HCT116 (cell line): ENCODE measurements at regions of chr5 and their contacts with region 1.

Region 1: GRCh38 chr5:76790632-76791290 is 28.1 kb upstream of the F2RL1 start:
- DNase-seq: peak; percentile 95
- ATAC-seq: peak; percentile 76
- H3K4me3 ChIP-seq: peak overlapping the region in 1 of 2 experiments; percentile 12; a peak in 1 of 4 replicates
- H3K27ac ChIP-seq: peak overlapping the region; percentile 79
- H3K4me1 ChIP-seq: peaks cover 46 to 75% of the 10 kb centered on the region in 2 experiments
- H3K27me3 ChIP-seq: no peaks in the 10 kb centered on the region
- CTCF ChIP-seq: no peak
- POLR2A ChIP-seq: no peak
- RAD21 ChIP-seq: peak; percentile 32; the same call in 1 of the 2 replicates

Region 2: GRCh38 chr5:76660360-76660759 is 130.4 kb before region 1 on chr5:
- CTCF ChIA-PET with region 1: no interaction called
- POLR2A ChIA-PET with region 1: no interaction called
- RAD21 ChIA-PET with region 1: no interaction called
- intact Hi-C with region 1: no loop called
- DNase-seq: no peak
- ATAC-seq: no peak
- H3K4me3 ChIP-seq: no peak overlapping the region
- H3K27ac ChIP-seq: no peak overlapping the region
- H3K4me1 ChIP-seq: no peaks in the 10 kb centered on the region
- H3K27me3 ChIP-seq: no peaks in the 10 kb centered on the region
- CTCF ChIP-seq: no peak
- POLR2A ChIP-seq: no peak
- RAD21 ChIP-seq: no peak

Region 3: GRCh38 chr5:76701298-76701697 is 89.5 kb before region 1 on chr5:
- CTCF ChIA-PET with region 1: no interaction called
- POLR2A ChIA-PET with region 1: no interaction called
- RAD21 ChIA-PET with region 1: no interaction called
- intact Hi-C with region 1: no loop called
- DNase-seq: no peak
- ATAC-seq: no peak
- H3K4me3 ChIP-seq: no peak overlapping the region
- H3K27ac ChIP-seq: no peak overlapping the region
- H3K4me1 ChIP-seq: no peaks in the 10 kb centered on the region
- H3K27me3 ChIP-seq: no peaks in the 10 kb centered on the region
- CTCF ChIP-seq: no peak
- POLR2A ChIP-seq: no peak
- RAD21 ChIP-seq: no peak

Region 4: DNA sequence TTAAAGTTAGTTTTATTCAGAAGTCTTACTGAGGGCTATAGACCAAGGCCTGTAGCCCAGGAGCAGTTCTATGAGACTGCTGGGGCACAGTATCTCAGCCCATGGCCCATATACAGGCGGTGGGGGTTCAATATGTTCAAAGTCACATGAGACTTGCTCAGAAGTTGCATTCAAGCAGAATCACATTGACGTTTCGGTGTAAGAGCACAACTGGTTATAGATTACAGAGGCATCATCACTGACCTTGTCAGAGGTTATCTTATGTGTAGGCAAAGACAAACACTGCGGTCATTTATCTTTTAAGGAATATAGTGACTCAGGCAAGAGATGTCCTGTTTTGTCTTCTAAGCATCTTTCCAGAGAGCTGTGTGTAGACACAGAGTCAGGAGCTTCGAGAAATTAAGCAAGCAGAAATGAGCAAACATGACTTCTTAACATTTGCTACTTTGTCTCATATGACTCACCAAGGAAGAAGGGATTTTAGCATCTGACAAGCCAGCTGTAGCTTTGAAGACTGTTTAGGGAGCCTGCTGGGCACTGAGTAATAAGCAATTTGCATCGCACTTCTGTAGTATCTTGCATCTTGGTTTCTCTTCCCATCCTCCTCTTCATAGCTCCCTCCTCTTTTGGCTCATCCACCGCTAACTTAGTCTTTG is 15.2 kb after region 1 on chr5:
- CTCF ChIA-PET with region 1: interaction called, 8 read pairs
- POLR2A ChIA-PET with region 1: interaction called, 28 read pairs
- RAD21 ChIA-PET with region 1: no interaction called
- intact Hi-C with region 1: no loop called
- DNase-seq: peak; percentile 94
- ATAC-seq: peak; percentile 79
- H3K4me3 ChIP-seq: peak overlapping the region; percentile 17 to 24
- H3K27ac ChIP-seq: peak overlapping the region; percentile 72
- H3K4me1 ChIP-seq: peaks cover 53 to 95% of the 10 kb centered on the region in 2 experiments
- H3K27me3 ChIP-seq: no peaks in the 10 kb centered on the region
- CTCF ChIP-seq: no peak
- POLR2A ChIP-seq: no peak
- RAD21 ChIP-seq: peak; percentile 26; the same call in 1 of the 2 replicates

Region 5: DNA sequence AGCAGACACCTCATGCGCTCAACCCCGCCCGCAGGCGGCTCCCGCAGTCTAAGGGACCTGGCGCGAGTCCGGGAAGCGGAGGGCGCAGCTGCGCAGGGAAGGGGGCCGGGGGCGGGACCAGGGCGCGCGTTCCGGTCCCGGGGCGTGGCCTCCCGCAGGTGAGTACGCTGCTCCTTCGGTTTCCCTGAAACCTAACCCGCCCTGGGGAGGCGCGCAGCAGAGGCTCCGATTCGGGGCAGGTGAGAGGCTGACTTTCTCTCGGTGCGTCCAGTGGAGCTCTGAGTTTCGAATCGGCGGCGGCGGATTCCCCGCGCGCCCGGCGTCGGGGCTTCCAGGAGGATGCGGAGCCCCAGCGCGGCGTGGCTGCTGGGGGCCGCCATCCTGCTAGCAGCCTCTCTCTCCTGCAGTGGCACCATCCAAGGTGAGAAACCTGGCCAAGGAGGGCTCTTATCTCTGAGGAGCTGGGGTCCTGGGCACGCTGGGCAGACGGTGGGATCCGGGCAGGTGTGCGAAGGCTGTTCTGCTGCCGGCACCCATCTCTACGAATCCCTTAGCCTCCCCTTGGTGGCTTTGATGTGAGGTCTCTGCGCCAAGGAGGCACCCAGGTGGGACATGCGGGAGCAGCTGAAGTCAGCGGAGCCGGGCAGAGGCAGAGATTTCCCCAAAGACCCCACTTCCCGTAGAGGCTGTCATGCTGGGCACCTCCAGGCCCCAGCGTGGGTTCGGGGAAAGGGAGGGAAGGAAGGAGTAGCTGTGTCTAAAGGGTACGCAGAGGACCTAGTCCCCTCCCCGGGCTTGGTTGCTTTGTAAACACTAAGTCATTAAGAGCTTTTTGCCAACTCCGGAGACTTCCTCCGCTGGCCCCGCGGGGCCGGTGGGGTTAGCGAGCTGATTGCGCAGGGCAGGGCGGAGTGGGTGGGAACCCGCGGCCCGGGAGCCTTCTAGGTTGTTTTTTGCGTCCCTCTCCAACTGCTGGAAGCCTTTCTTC is 28.4 kb after region 1 on chr5 and contains the start of gene F2RL1:
- CTCF ChIA-PET with region 1: no interaction called
- POLR2A ChIA-PET with region 1: interaction called, 17 read pairs
- RAD21 ChIA-PET with region 1: no interaction called
- intact Hi-C with region 1: no loop called
- DNase-seq: peak; percentile 90
- ATAC-seq: peak; percentile 83
- H3K4me3 ChIP-seq: peak within 1 kb of the TSS; percentile 98 to 99
- H3K27ac ChIP-seq: peak within 1 kb of the TSS; percentile 91
- H3K4me1 ChIP-seq: peaks cover 47 to 79% of the 10 kb centered on the region in 2 experiments
- H3K27me3 ChIP-seq: no peaks in the 10 kb centered on the region
- CTCF ChIP-seq: no peak
- POLR2A ChIP-seq: peak; percentile 42
- RAD21 ChIP-seq: no peak
- total RNA-seq, gene F2RL1: 119 TPM

Region 6: GRCh38 chr5:76838481-76839261 is 47.9 kb after region 1 on chr5:
- CTCF ChIA-PET with region 1: no interaction called
- POLR2A ChIA-PET with region 1: no interaction called
- RAD21 ChIA-PET with region 1: no interaction called
- intact Hi-C with region 1: loop called (anchors 5 kb)
- DNase-seq: peak; percentile 92
- ATAC-seq: peak; percentile 79
- H3K4me3 ChIP-seq: peak overlapping the region; percentile 3 to 30; a peak in 2 of 4 replicates
- H3K27ac ChIP-seq: peak overlapping the region; percentile 96
- H3K4me1 ChIP-seq: peaks cover 68 to 82% of the 10 kb centered on the region in 2 experiments
- H3K27me3 ChIP-seq: no peaks in the 10 kb centered on the region
- CTCF ChIP-seq: no peak
- POLR2A ChIP-seq: no peak
- RAD21 ChIP-seq: peak; percentile 15